ENCODE measurements at regions of chr15 and their contacts with region 1.

Region 1: DNA sequence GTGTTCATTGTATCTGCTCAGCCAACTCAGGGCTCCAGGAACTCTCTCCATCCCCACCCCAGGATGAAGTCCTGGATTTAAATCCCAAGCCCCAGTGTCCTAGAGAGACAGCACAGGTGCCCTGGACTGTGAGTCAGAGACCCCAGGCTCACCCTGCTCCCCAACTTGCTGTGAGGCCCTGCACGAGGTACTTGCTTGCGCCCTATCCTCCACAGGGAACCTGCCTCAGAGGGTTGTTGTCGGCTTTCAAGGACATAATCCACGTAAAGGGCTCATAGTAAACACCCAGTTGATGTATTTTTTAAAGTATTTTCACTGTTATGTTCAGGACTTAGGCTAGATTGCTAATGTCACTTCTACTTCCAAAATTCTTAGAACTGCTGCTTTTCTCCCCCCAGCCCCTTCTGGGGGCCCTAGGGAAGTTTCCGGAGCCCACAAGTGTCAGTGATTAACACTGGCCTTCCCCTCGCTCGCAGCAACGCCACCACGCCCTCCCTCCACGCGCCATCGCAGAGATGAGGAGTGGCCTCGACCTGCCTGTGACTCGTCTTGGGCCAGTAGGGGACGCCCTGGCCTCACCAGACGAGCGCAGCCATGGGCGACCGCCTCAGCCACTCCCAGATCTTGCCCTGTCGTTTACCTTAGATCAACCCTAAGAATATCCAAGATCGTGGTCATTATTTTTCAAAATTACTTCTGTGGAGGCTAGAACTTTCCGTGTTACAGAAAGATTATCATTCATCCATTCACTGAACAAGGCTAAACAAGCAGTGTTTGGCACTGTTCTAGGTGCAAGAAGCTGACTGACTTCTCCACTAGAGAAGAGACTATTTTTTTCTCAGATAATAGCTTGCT is 6.0 kb upstream of the SRP14 start:
- DNase-seq: peak; percentile 94 to 95
- ATAC-seq: peak; percentile 93
- H3K4me3 ChIP-seq: no peak overlapping the region
- H3K27ac ChIP-seq: no peak overlapping the region
- H3K4me1 ChIP-seq: no peaks in the 10 kb centered on the region
- H3K27me3 ChIP-seq: no peaks in the 10 kb centered on the region

Region 2: GRCh38 chr15:40081691-40082194 is 36.8 kb after region 1 on chr15:
- intact Hi-C with region 1: no loop called
- DNase-seq: peak in 1 of 2 donors; percentile 81
- ATAC-seq: peak; percentile 90
- H3K4me3 ChIP-seq: no peak overlapping the region
- H3K27ac ChIP-seq: peak overlapping the region in 1 of 2 donors; percentile 36
- H3K4me1 ChIP-seq: peaks cover 0 to 4% of the 10 kb centered on the region in 2 donors
- H3K27me3 ChIP-seq: no peaks in the 10 kb centered on the region

Region 3: GRCh38 chr15:40160689-40161688 is 116.0 kb after region 1 on chr15 and contains the start of gene BUB1B:
- intact Hi-C with region 1: loop called in 1 of 2 experiments (anchors 5 kb)
- DNase-seq: peak; percentile 94 to 96
- ATAC-seq: peak; percentile 96
- H3K4me3 ChIP-seq: peak within 1 kb of the TSS in 1 of 2 donors; percentile 2
- H3K27ac ChIP-seq: no peak within 1 kb of the TSS
- H3K4me1 ChIP-seq: no peaks in the 10 kb centered on the region
- H3K27me3 ChIP-seq: no peaks in the 10 kb centered on the region
- total RNA-seq, gene BUB1B: 0.84 to 5.0 TPM

Region 4: DNA sequence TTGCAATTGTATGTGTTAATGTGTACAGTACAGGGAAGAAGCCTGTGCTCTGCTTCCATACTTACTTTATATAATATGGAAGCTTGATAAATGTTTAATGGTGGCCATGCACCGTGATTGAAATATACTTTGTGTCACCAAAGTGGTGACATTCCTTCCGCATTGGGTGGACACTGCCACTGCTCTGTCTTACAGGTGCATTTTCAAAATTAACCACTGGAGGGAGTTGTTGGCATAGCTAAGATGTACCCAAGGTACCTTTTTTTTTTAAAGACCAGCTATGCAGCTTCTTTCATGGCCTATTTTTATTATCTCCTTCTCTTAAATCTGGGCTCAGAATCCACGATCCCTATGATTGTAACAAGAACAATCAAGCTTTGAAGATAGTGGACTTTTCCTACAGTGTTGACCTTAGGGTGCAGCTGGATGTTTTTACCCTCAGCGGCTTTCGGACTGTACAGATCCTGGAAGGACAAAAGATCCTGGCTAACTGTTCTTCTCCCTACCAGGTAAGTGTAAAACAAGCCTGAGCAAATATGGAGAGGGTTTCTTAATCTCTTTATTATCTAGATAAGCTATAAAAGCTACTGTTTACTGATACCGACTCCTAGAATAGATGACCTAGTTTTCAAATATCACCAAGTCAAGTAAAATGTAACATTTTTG is 172.3 kb after region 1 on chr15:
- intact Hi-C with region 1: loop called (anchors 5 to 10 kb)
- DNase-seq: no peak
- ATAC-seq: peak; percentile 86
- H3K4me3 ChIP-seq: no peak overlapping the region
- H3K27ac ChIP-seq: no peak overlapping the region
- H3K4me1 ChIP-seq: no peaks in the 10 kb centered on the region
- H3K27me3 ChIP-seq: no peaks in the 10 kb centered on the region

Measured in aorta (tissue), 5 donors.